ENCODE measurements at regions of chr11 and their contacts with region 1.

Region 1: DNA sequence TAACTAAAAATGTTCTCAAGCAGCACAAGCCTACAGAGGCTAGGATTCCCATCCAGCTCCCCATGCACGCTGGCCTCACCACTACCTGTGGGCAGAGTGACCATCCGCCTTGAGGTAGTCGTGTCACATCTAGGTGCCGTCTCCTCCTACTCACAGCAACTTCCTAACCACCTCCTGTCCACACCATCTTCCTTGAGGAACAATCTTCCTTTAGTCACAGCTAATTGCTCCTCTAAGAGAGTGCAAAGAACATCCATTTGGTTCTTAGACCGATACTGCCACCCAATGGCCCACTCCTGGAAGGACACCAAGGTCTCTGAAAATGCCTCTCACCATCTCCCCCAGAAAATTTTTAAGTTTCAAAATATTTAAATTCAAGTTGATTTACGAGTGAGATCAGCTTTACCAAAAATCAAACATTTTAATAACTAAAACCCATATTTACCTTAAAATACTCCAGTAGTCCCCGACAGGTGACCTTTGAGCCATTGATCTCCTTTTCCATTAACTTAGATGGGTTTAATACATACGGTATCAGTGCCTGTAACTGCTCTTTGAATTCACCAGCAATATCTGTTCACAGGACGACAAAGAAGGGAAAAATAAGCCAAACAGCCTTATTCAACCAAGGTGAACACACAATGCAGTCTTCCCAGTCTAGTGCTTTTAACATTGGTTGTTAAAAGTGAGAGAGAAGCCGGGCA is 21.7 kb upstream of the PLAAT3 start:
- DNase-seq: peak; percentile 74 to 83
- H3K4me3 ChIP-seq: no peak overlapping the region
- H3K4me1 ChIP-seq: peaks cover 19% of the 10 kb centered on the region
- H3K27me3 ChIP-seq: no peaks in the 10 kb centered on the region

Region 2: DNA sequence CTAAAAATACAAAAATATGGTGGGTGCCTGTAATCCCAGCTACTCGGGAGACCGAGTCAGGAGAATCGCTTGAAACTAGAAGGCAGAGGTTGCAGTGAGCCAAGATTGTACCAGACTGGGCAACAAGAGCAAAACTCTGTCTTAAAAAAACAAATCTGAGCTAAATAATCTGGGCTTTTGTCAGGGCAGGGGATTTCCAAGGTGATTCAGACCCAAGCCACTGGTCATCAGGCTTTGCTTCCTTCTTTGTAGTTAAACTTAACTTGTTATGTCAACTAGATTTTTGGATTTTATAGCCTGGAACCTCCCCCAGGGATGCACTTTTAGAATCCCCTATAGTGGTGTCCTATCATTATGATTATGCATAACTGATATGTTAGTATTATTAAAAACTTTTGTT is 593.3 kb before region 1 on chr11:
- in situ Hi-C with region 1: loop called (anchors 25 kb)
- DNase-seq: no peak
- H3K4me3 ChIP-seq: no peak overlapping the region
- H3K4me1 ChIP-seq: no peaks in the 10 kb centered on the region
- H3K27me3 ChIP-seq: no peaks in the 10 kb centered on the region

Region 3: DNA sequence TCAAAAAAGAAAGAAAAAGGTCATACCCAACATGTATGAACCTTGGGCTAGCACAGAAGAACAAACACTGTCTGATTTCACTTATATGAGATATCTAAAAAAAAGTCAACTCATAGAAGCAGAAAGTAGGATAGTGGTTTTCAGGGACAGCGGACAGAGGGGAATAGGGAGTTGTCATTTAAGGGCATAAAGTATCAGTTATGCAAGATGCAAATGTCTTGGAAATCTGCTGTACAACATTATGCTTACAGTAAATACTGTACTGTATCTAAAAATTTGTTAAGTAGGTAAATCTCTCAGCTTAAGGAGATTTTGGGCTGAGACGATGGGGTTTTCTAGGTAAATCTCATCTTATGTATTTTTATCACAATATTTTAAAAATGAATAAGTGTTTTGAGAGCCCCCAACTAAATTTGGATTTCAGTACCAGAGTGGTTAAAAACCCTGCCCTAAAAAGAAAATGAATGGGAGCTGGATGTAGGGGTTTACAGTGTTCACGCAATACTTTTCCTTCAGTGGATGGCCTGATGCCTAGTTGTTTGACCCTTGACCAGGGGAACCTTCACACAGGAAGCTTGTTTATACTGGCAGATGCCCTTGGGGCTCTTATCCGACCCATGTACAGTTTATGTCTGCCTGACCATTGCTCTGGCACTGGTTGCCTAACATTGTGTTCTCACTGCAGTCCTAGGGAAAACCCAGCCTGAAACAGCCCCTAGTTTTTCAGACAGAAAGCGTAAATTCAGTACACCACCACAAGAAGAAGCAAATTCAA is 231.6 kb before region 1 on chr11:
- in situ Hi-C with region 1: no loop called
- DNase-seq: no peak
- H3K4me3 ChIP-seq: no peak overlapping the region
- H3K4me1 ChIP-seq: no peaks in the 10 kb centered on the region
- H3K27me3 ChIP-seq: peaks cover 17% of the 10 kb centered on the region

Region 4: DNA sequence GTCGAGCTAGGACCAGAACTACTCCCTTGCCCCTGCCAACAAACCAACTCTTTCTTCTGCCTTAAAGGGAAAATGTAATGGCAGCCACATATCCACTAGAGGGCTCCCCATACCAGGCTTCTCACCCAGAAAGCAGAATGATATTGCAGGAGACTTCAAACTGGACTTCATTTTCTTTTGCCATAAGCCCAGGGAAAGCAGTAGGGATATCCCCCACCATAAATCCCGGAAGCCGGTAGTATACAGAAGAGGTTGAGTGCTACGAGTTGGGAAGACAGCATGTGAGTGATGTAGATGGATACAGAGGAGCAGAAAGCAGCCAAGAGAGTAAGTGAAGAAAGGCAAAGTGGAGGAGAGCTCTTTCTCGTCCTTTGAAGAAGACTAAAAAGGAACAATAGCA is 157.0 kb before region 1 on chr11:
- in situ Hi-C with region 1: loop called (anchors 5 kb)
- DNase-seq: peak; percentile 74 to 93
- H3K4me3 ChIP-seq: no peak overlapping the region
- H3K4me1 ChIP-seq: peaks cover 8% of the 10 kb centered on the region
- H3K27me3 ChIP-seq: no peaks in the 10 kb centered on the region

Region 5: DNA sequence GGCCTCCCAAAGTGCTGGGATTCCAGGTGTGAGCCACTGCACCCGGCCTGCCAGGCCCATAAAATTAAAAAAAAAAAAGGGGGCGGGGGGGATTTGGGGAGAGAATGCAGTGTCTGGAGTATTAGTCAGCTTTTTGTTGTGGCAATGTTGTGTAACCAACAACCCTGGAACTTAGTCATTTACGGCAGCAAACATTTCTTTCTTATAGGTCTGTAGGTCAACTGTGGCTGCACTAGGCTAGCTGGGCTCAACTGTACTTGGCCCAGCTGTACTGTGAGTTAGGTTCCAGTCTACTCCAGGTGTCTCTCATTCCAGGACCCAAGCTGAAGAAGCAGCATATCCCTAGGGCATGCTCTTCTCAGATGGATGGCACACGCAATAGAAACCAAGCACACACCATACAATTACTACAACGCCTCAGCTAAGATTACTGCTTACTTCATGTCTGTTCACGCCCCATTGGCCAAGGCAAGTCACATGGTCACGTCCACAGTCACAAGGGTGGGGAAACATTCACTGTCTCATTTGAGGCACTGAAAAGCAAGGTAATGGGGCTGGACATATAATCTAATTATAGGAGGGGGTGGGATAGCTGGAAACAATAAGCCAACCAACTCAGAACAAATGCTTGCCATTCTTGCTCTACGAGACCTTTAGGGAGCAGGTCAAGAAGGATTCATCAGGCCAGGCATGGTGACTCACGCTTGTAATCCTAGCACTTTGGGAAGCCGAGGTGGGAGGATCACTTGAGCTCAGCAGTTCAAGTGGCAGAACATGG is 166.9 kb after region 1 on chr11:
- in situ Hi-C with region 1: no loop called
- DNase-seq: peak; percentile 9 to 64
- H3K4me3 ChIP-seq: no peak overlapping the region
- H3K4me1 ChIP-seq: peaks cover 8% of the 10 kb centered on the region; the same call in 1 of the 2 replicates
- H3K27me3 ChIP-seq: no peaks in the 10 kb centered on the region

Measured in HAP-1 (cell line).